CD14-positive monocyte (primary cell): ENCODE measurements at regions of chr14 and their contacts with region 1.

Region 1: DNA sequence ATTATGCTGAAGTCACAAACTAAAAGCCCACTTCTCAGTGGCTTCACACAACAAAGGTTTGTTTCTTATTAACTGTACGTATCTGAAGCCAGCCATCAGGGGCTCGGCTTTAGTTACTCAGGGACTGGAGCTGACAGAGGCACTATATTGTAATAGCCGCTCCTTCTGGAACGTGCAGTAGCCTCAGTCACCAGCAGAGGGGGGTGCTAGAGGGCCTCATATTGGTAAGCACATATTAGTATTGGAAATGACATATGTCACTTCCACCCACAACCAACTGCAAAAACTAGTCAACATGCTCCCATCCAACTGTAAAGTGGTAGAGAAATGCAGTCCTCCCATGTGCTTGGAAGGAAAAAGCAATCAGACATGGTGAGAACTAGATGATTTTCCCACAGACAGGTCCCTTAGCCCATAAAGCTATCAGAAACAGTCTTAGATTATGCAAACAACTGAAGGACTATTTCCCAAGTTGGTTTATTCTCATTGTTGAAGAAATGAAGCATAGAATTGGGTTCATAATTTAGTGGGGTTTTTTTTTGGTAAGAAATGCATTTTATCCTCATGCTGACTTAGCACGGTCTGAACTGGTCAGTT is 183.6 kb upstream of the G2E3 start:
- DNase-seq: peak; percentile 24 to 45 (median 39)
- H3K4me3 ChIP-seq: no peak overlapping the region
- H3K4me3 Mint-ChIP-seq: no peak overlapping the region
- H3K27ac ChIP-seq: no peak overlapping the region
- H3K27ac Mint-ChIP-seq: no peak overlapping the region
- H3K4me1 ChIP-seq: no peaks in the 10 kb centered on the region
- H3K4me1 Mint-ChIP-seq: peaks cover 3% of the 10 kb centered on the region
- H3K27me3 ChIP-seq: peaks cover 2 to 4% of the 10 kb centered on the region in 2 donors
- H3K27me3 Mint-ChIP-seq: peaks cover 0 to 8% (median 2%) of the 10 kb centered on the region in 3 donors
- CTCF ChIP-seq: peak; percentile 85

Region 2: DNA sequence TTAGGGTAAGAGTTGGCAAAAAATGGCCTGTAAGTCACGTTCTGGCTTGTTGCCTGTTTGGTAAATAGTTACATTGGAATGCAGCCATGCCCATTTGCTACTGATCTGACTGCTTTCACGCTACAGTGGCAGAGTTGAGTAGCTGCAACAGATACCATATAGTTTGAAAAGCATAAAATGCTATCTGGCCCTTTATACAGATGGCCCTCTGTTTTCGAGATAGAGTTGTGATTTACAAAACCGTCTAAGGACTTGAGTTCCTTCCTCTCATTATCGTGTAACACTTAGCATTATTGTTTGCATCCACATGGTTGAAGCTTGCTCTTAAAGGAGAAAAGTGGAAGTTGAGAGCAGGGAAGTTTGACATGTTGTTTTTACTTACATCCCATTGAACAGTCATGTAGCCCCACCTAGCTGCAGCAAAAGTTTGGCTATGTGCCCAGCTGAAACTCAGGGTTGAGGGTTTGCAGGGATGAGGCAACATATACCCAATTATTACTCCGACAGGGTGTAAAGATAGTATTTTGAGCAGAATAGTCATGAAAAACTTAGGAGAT is 235.5 kb after region 1 on chr14:
- intact Hi-C with region 1: loop called (anchors 5 to 10 kb)
- DNase-seq: peak; percentile 81 to 85 (median 83)
- H3K4me3 ChIP-seq: no peak overlapping the region
- H3K4me3 Mint-ChIP-seq: peak overlapping the region in 1 of 2 donors; percentile 55
- H3K27ac ChIP-seq: peak overlapping the region in 1 of 2 donors; percentile 76
- H3K27ac Mint-ChIP-seq: peak overlapping the region; percentile 54 to 77 (median 71)
- H3K4me1 ChIP-seq: peaks cover 11 to 16% of the 10 kb centered on the region in 2 donors
- H3K4me1 Mint-ChIP-seq: peaks cover 19% of the 10 kb centered on the region
- H3K27me3 ChIP-seq: no peaks in the 10 kb centered on the region
- H3K27me3 Mint-ChIP-seq: no peaks in the 10 kb centered on the region
- CTCF ChIP-seq: peak; percentile 74